ENCODE measurements at regions of chrX and their contacts with region 1.

Region 1: GRCh38 chrX:71254092-71254941 is at the start of gene ZMYM3:
- DNase-seq: peak; percentile 93
- ATAC-seq: peak; percentile 96
- total RNA-seq, gene ZMYM3: 16.3 TPM

Region 2: DNA sequence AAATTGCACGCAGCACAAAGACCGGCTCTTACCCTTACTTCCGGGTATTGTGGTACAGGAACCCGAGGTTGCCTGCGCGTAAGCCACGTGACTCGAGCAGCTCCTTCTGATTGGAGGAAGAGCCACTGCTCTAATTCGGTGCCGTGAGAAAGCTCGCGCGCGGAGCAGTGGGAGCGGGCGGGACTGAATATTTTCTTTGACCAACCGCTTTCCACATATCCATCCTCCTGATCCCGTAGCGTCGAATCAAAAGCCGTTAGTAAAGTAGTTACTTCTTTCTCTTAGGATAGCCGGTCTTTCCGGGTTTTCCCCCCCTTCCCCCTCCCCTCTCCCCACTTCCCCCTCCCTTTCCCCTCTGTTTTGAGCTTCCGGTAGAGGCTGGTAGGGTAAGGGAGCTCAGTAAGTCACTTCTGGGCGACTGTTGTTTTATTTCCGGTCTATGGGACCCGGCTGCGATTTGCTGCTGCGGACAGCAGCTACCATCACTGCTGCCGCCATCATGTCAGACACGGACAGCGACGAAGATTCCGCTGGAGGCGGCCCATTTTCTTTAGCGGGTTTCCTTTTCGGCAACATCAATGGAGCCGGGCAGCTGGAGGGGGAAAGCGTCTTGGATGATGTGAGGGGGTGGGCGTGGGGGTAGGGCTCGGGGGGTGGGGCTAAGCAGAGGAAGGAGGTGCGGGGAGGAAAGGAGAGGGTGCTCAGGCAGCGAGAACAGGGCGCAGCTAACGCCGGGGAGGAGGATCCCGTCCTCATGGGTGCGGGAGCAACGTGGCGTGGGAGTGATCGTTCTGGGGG is 111.8 kb after region 1 on chrX and contains the start of gene TAF1:
- intact Hi-C with region 1: loop called (anchors 5 kb)
- DNase-seq: peak; percentile 94
- ATAC-seq: peak; percentile 97
- total RNA-seq, gene TAF1: 15.8 TPM